ENCODE measurements at regions of chr5 and their contacts with region 1.

Region 1: DNA sequence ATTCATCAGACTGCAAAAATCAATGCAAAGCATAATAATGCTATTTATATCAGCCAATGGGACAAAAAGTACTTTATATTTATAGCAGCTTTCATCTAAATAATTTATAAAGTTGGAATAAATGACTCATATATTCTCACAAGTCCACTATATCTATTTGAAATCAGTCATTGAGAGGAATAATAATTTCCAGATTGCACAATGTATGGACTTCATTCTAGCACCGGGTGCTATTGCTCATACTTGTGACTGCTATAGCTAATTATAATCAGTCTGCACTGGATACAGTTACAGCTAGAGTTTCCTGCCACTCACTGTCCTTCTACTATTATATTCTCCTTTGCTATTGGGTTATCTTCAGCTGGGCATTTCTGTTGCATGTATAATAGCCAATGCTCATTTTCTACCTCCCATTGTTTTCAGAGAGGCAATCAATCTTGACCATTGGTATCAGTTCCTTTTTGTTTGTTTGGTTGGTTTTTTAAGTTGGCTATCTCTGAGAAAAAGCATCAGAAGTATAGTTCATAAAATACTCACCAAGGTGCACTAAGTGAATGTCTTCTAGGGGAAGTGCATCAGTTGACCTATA is 1.9 kb downstream of the CDH18 start:
- DNase-seq: no peak
- ATAC-seq: no peak
- H3K4me3 Mint-ChIP-seq: no peak overlapping the region
- H3K27ac Mint-ChIP-seq: no peak overlapping the region
- H3K4me1 Mint-ChIP-seq: no peaks in the 10 kb centered on the region
- H3K27me3 Mint-ChIP-seq: no peaks in the 10 kb centered on the region

Region 2: DNA sequence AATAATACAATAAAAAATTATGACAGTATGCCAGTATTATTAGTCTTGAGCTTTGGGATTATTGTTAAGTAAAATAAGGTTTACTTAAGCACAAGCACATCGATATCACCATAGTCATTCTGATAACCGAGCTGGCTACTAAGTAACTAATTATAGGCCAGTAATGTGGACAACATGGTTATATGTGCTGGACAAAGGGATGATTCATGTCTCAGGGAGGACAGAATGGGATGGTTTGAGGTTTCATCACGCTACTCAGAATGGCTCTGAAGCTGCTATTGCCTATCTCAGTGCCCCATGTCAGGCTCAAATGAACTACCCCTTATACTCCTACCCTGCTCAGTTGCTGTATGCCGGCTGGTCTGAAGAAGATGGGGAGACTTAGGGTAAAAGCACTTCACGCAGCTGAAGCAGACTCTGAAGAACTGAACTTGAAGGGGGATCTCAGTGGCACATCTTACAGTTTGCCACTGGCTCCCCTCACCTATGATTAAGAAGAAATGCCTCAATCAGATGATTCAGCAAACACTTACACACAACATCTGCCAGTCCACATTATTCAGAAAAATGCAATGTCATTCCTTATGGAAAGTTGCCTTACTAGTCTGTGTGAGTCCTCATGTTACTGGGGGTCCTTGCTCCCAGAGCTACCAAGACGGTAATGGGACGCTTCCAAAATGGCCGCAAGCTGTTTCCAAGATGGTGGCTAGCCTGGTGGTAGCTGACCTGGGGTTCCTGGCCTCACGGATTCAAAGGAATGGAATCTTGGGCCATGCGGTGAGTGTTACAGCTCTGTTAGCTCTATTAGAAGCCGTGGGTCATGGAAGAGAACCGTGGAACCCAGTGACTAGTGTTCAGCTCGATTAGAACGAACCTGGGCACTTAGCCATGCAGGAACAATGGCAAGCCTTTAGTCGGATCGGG is 1253.3 kb before region 1 on chr5:
- CTCF ChIA-PET with region 1: no interaction called
- POLR2A ChIA-PET with region 1: no interaction called
- intact Hi-C with region 1: no loop called
- DNase-seq: no peak
- ATAC-seq: no peak
- H3K4me3 Mint-ChIP-seq: no peak overlapping the region
- H3K27ac Mint-ChIP-seq: no peak overlapping the region
- H3K4me1 Mint-ChIP-seq: peaks cover 12% of the 10 kb centered on the region
- H3K27me3 Mint-ChIP-seq: no peaks in the 10 kb centered on the region

Region 3: GRCh38 chr5:19388391-19388790 is 597.7 kb before region 1 on chr5:
- CTCF ChIA-PET with region 1: no interaction called
- POLR2A ChIA-PET with region 1: no interaction called
- intact Hi-C with region 1: no loop called
- DNase-seq: no peak
- ATAC-seq: no peak
- H3K4me3 Mint-ChIP-seq: no peak overlapping the region
- H3K27ac Mint-ChIP-seq: no peak overlapping the region
- H3K4me1 Mint-ChIP-seq: no peaks in the 10 kb centered on the region
- H3K27me3 Mint-ChIP-seq: no peaks in the 10 kb centered on the region

Region 4: DNA sequence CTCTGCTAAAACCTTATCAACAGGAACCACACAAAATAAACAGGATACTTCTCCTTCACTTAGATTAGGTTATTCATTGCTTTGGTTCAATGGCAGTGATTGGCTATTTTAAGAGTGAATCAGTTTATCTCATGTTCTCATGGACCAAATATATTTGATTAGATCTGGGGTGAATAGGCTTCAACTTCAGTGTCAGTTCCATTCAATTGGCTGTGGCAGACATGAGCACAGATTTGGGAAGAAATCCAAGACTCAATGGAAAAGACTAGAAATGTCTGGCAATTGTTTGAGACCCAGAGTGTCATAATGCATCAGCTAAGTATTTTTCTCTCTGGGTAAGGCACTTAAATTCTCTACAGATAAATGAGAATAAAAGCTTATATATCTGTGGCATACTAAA is 35.2 kb before region 1 on chr5:
- CTCF ChIA-PET with region 1: no interaction called
- POLR2A ChIA-PET with region 1: no interaction called
- intact Hi-C with region 1: loop called in 1 of 2 experiments (anchors 1 kb)
- DNase-seq: no peak
- ATAC-seq: no peak
- H3K4me3 Mint-ChIP-seq: no peak overlapping the region
- H3K27ac Mint-ChIP-seq: no peak overlapping the region
- H3K4me1 Mint-ChIP-seq: no peaks in the 10 kb centered on the region
- H3K27me3 Mint-ChIP-seq: no peaks in the 10 kb centered on the region

Region 5: GRCh38 chr5:20017021-20017420 is 30.9 kb after region 1 on chr5:
- CTCF ChIA-PET with region 1: no interaction called
- POLR2A ChIA-PET with region 1: no interaction called
- intact Hi-C with region 1: no loop called
- DNase-seq: no peak
- ATAC-seq: no peak
- H3K4me3 Mint-ChIP-seq: no peak overlapping the region
- H3K27ac Mint-ChIP-seq: no peak overlapping the region
- H3K4me1 Mint-ChIP-seq: no peaks in the 10 kb centered on the region
- H3K27me3 Mint-ChIP-seq: no peaks in the 10 kb centered on the region

Measured in activated CD4-positive, alpha-beta T cell treated with anti-CD3 and anti-CD28 coated beads for 36 hours (primary cell).